ENCODE measurements at regions of chr15 and their contacts with region 1.

Region 1: DNA sequence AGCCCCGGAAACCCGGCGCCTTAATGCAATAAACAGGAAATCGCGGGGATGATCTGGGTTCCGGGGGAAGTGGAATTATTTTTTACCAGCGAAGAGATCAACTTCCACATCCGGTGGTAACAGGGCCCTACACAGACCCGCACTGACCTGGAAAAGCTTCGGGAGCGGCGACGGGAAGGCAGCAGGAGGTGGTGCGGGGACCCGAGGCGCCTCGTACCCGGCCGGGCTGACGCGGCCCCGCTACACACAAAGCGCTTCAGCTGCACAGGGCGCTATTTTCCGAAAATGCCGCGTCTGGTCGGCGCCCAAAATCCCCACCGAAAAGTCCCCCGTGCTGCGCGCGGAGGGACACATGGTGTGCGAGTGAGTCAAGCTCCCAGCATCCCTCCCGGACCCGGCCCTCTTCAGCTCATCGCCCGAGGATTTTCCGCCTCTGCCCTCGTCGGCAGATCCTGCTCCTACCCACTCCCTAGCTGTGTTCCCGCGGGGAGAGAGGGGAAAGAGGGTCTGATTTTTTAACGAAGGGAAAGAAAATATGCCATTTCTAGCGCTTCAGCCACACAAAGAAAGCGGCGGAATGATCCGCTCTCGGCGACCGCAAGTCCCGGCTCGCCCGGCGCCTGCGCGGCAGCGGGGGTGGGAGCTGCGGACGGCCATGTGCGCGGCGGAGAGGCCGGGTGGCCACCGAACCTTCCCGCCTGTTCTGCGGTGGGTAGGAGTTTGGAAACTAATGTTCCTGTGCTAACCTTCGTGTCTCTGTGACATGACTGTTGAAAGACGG is at the start of gene GABPB1:
- DNase-seq: peak; percentile 82
- H3K4me3 ChIP-seq: peak within 1 kb of the TSS; percentile 99 to 100
- H3K27ac ChIP-seq: peak within 1 kb of the TSS; percentile 99
- H3K4me1 ChIP-seq: no peaks in the 10 kb centered on the region
- H3K27me3 ChIP-seq: no peaks in the 10 kb centered on the region
- CTCF ChIP-seq: peak in 1 of 4 experiments; percentile 0
- POLR2A ChIP-seq: peak; percentile 59
- total RNA-seq, gene GABPB1: 31.8 to 34.1 TPM

Region 2: DNA sequence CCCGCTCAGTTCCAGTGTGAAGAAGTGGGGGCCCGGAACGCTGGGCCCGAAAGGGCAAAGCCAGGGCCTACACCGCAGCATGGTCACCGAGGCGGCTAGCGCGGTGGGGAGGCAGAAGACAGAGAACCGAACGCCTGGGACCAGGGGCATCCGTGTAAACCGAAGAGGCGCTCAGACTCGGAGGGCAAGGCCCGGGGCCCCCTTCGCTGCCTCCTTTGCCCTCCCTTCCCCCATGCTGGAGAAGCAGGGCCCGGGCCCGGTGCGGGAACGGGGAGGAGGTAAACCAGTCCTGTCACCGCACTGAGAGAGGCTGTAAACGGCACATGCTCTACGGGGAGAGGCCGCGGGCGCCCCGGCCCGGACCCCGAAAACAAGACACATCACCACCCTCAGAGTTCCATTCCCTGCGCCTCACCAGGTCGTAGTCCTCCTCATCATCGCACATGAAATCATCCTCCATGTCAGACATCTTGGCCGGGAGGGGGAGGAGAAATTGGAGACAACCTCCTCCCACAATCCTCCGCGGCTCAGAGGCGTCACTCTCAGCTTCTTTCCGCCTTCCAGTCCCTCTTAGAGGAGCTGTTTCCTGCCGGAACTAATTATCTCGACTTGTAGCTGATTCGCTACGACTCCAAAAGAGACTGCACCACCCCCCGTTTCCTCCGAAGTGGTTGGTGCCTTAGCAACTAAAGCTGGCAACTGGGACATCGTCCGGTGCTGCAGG is 1199.8 kb before region 1 on chr15 and contains the start of gene COPS2:
- intact Hi-C with region 1: loop called (anchors 10 kb)
- DNase-seq: peak; percentile 96
- H3K4me3 ChIP-seq: peak within 1 kb of the TSS; percentile 76 to 80
- H3K27ac ChIP-seq: peak within 1 kb of the TSS; percentile 85
- H3K4me1 ChIP-seq: no peaks in the 10 kb centered on the region
- H3K27me3 ChIP-seq: no peaks in the 10 kb centered on the region
- CTCF ChIP-seq: peak in 3 of 4 experiments; percentile 15 to 29 (median 21)
- POLR2A ChIP-seq: peak; percentile 48
- total RNA-seq, gene COPS2: 36.3 to 65.3 TPM

Region 3: DNA sequence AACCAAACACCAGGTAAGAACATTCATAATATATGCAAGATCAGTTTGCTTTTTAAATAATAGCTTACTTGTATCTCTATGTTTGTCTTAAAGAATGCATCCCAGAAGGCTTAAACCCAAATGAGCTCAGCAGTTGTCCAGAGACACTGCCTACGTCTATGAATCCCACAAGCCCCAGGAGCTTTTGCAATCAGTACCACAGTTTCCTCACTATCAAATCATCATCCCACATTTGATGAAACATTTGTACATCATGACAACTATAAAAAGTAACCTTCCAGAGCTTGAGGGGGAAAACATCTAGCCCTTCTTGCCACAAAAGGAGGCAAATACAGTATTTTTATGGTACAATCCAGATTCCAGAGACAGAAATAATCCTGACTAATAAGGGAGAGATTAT is 299.7 kb before region 1 on chr15:
- intact Hi-C with region 1: no loop called
- DNase-seq: no peak
- H3K4me3 ChIP-seq: no peak overlapping the region
- H3K27ac ChIP-seq: peak overlapping the region in 1 of 2 donors; percentile 25
- H3K4me1 ChIP-seq: no peaks in the 10 kb centered on the region
- H3K27me3 ChIP-seq: no peaks in the 10 kb centered on the region
- CTCF ChIP-seq: no peak
- POLR2A ChIP-seq: no peak

Region 4: GRCh38 chr15:50145451-50145872 is 209.6 kb before region 1 on chr15:
- intact Hi-C with region 1: no loop called
- DNase-seq: peak; percentile 19
- H3K4me3 ChIP-seq: no peak overlapping the region
- H3K27ac ChIP-seq: no peak overlapping the region
- H3K4me1 ChIP-seq: no peaks in the 10 kb centered on the region
- H3K27me3 ChIP-seq: no peaks in the 10 kb centered on the region
- CTCF ChIP-seq: peak in 3 of 4 experiments; percentile 61 to 70 (median 70)
- POLR2A ChIP-seq: no peak

Region 5: GRCh38 chr15:50424066-50424890 is 69.2 kb after region 1 on chr15 and contains the start of gene USP8:
- intact Hi-C with region 1: loop called (anchors 10 kb)
- DNase-seq: peak; percentile 92
- H3K4me3 ChIP-seq: peak within 1 kb of the TSS; percentile 61 to 74
- H3K27ac ChIP-seq: peak within 1 kb of the TSS; percentile 90
- H3K4me1 ChIP-seq: peaks cover 4% of the 10 kb centered on the region
- H3K27me3 ChIP-seq: no peaks in the 10 kb centered on the region
- CTCF ChIP-seq: no peak
- POLR2A ChIP-seq: peak; percentile 84
- total RNA-seq, gene USP8: 56.3 to 80.5 TPM

Region 6: DNA sequence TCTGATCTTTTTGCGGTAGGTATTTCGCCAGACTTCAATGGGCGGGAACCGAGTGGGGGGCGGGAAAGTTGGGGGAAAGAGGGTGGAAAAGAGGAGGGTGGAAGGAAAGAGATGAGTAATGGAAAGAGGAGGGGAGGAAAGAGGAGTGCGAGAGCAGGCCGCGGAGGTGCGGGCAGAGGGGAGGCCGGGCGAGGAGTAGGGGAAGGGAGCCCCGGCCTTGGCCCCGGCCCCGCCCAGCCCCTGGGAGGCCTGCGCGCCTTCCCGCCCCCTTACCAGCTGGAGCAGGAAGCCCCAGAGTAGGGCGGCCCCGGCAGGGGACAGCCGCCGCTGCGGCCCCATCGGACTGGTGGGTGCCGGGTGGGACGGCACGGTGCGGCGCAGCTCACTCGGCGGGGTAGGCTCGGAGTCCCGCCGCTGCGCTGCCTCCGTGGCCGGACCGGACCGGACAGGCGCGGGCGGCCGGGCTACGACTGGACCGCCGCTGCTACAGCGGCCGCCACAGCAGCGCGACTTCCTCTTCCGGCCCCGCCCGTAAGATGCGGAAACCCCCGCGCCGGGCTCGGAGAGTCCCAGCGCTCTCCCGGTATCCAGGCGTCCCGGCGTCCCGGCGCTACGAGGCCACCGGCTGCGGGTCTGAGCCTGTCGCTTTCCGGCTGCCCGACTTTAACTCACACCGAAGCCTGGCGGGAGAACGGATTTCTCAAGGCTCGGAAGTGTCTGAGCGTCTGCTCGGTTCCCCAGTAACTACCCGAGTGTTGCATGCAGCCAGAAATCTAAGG is 410.4 kb after region 1 on chr15 and contains the start of gene SPPL2A:
- intact Hi-C with region 1: loop called (anchors 10 kb)
- DNase-seq: peak; percentile 76
- H3K4me3 ChIP-seq: peak within 1 kb of the TSS; percentile 93 to 96
- H3K27ac ChIP-seq: peak within 1 kb of the TSS; percentile 94 to 95
- H3K4me1 ChIP-seq: no peaks in the 10 kb centered on the region
- H3K27me3 ChIP-seq: no peaks in the 10 kb centered on the region
- CTCF ChIP-seq: no peak
- POLR2A ChIP-seq: peak; percentile 75
- total RNA-seq, gene SPPL2A: 129 to 335 TPM